Mammary epithelial cell (primary cell): ENCODE measurements at regions of chr21 and their contacts with region 1.

Region 1: DNA sequence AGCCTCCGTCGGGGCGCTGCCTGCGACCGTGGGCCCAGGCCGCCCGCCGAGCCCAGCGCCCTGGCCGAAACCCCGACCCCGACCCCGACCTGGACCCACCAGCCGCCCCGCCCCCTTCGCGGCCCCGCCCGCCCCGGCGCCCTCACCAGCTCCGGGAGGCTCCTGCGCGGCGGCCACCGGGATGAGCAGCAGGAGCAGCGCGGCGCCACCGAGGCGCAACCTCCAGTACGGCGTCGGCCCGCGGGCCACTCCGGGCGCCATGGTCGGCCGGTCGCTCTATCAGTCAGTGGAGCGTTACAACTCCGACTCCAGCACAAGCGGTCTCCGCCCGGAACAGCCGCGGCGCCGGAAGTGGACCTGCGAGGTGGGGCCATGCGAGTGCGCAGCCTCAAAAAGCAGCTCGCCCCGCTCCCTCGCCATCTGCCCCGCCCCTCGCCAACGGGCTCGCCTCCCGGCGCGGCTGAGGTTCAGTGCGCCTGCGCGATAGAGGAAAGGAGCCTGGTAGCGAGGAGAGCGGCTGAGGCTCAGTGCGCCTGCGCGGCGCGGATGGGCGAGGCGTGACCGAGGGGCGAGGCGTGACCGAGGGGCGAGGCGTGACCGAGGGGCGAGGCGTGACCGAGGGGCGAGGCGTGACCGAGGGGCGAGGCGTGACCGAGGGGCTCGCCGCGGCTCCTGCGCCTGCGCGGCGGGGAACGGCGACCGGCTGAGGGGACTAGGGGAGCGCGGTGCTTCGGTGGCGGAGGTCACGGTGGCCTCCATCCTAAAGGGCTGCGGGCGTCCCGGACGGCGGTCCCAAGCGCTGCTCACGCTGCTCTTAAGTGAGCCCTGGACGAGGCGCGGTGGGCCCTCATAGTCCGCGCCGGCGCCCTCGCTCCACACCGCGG is at the start of gene PTTG1IP:
- DNase-seq: peak; percentile 97
- H3K4me3 ChIP-seq: peak within 1 kb of the TSS; percentile 71 to 86 (median 75)
- H3K27ac ChIP-seq: peak within 1 kb of the TSS; percentile 72
- H3K4me1 ChIP-seq: peaks cover 54% of the 10 kb centered on the region
- H3K27me3 ChIP-seq: no peaks in the 10 kb centered on the region
- CTCF ChIP-seq: no peak
- total RNA-seq, gene PTTG1IP: 131 to 269 TPM

Region 2: GRCh38 chr21:44817506-44817880 is 56.1 kb before region 1 on chr21:
- CTCF ChIA-PET with region 1: no interaction called
- dilution Hi-C with region 1: no loop called
- in situ Hi-C with region 1: no loop called
- intact Hi-C with region 1: loop called (anchors 5 kb)
- DNase-seq: peak; percentile 83
- H3K4me3 ChIP-seq: peak overlapping the region; percentile 61 to 80 (median 77)
- H3K27ac ChIP-seq: no peak overlapping the region
- H3K4me1 ChIP-seq: peaks cover 5% of the 10 kb centered on the region
- H3K27me3 ChIP-seq: no peaks in the 10 kb centered on the region
- CTCF ChIP-seq: no peak

Region 3: DNA sequence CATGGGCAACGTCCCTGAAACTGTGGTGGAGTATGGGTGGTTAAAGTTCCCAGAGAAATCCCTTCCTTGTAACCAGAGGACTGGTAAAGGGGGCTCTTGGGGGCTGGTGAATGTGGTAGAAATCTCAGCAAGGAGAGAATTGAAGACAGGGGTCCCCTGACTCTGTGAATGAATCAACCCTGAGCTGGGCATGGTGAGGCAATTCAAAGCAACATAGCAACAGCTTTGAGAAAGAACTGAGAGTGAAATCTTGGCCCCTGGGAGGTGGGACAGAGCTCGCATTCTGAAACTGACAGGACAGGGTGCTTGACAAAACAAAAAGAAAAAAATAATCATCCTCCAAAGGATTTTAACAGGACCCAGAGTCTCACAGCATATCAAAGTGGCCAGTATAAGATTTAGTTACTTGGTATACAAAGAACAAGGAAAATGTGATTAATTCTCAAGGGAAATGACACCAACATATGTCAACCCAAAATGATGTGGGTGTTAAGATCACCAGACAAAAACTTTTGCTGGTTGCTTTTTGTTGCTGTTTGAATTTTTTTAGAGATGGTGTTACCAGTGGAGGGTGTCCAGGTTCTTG is 44.0 kb before region 1 on chr21:
- CTCF ChIA-PET with region 1: no interaction called
- dilution Hi-C with region 1: no loop called
- in situ Hi-C with region 1: no loop called
- intact Hi-C with region 1: no loop called
- DNase-seq: no peak
- H3K4me3 ChIP-seq: no peak overlapping the region
- H3K27ac ChIP-seq: no peak overlapping the region
- H3K4me1 ChIP-seq: no peaks in the 10 kb centered on the region
- H3K27me3 ChIP-seq: no peaks in the 10 kb centered on the region
- CTCF ChIP-seq: no peak

Region 4: GRCh38 chr21:45029298-45029947 is 155.8 kb after region 1 on chr21:
- CTCF ChIA-PET with region 1: no interaction called
- dilution Hi-C with region 1: no loop called
- in situ Hi-C with region 1: no loop called
- intact Hi-C with region 1: no loop called
- DNase-seq: no peak
- H3K4me3 ChIP-seq: no peak overlapping the region
- H3K27ac ChIP-seq: no peak overlapping the region
- H3K4me1 ChIP-seq: peaks cover 8% of the 10 kb centered on the region
- H3K27me3 ChIP-seq: peaks cover 1% of the 10 kb centered on the region
- CTCF ChIP-seq: no peak